Natural killer cell (primary cell): ENCODE measurements at regions of chr6 and their contacts with region 1.

Region 1: GRCh38 chr6:26031595-26032339 is 55.5 kb upstream of the HFE start:
- DNase-seq: peak; percentile 83 to 92
- ATAC-seq: peak; percentile 59 to 80 (median 66)
- H3K4me3 ChIP-seq: peak overlapping the region; percentile 78
- H3K4me3 Mint-ChIP-seq: peak overlapping the region; percentile 96
- H3K27ac ChIP-seq: peak overlapping the region; percentile 92
- H3K27ac Mint-ChIP-seq: peak overlapping the region; percentile 94 to 99
- H3K4me1 ChIP-seq: peaks cover 32% of the 10 kb centered on the region
- H3K4me1 Mint-ChIP-seq: peaks cover 53 to 54% of the 10 kb centered on the region in 2 donors
- H3K27me3 ChIP-seq: no peaks in the 10 kb centered on the region
- H3K27me3 Mint-ChIP-seq: peaks cover 0 to 2% of the 10 kb centered on the region in 2 donors
- CTCF ChIP-seq: no peak

Region 2: GRCh38 chr6:26020329-26021000 is 11.3 kb before region 1 on chr6:
- intact Hi-C with region 1: loop called (anchors 1 kb)
- DNase-seq: peak; percentile 85 to 95
- ATAC-seq: peak; percentile 50 to 69 (median 54)
- H3K4me3 ChIP-seq: peak overlapping the region; percentile 77
- H3K4me3 Mint-ChIP-seq: peak overlapping the region; percentile 98
- H3K27ac ChIP-seq: peak overlapping the region; percentile 95
- H3K27ac Mint-ChIP-seq: peak overlapping the region; percentile 97 to 100
- H3K4me1 ChIP-seq: peaks cover 27% of the 10 kb centered on the region
- H3K4me1 Mint-ChIP-seq: peaks cover 36 to 41% of the 10 kb centered on the region in 2 donors
- H3K27me3 ChIP-seq: no peaks in the 10 kb centered on the region
- H3K27me3 Mint-ChIP-seq: no peaks in the 10 kb centered on the region
- CTCF ChIP-seq: no peak

Region 3: GRCh38 chr6:26045065-26045927 is 13.5 kb after region 1 on chr6:
- intact Hi-C with region 1: loop called (anchors 1 kb)
- DNase-seq: peak; percentile 64 to 92
- ATAC-seq: peak; percentile 52 to 73 (median 64)
- H3K4me3 ChIP-seq: peak overlapping the region; percentile 64
- H3K4me3 Mint-ChIP-seq: peak overlapping the region; percentile 95
- H3K27ac ChIP-seq: peak overlapping the region; percentile 91
- H3K27ac Mint-ChIP-seq: peak overlapping the region; percentile 97 to 98
- H3K4me1 ChIP-seq: peaks cover 26% of the 10 kb centered on the region
- H3K4me1 Mint-ChIP-seq: peaks cover 25 to 28% of the 10 kb centered on the region in 2 donors
- H3K27me3 ChIP-seq: no peaks in the 10 kb centered on the region
- H3K27me3 Mint-ChIP-seq: no peaks in the 10 kb centered on the region
- CTCF ChIP-seq: no peak

Region 4: DNA sequence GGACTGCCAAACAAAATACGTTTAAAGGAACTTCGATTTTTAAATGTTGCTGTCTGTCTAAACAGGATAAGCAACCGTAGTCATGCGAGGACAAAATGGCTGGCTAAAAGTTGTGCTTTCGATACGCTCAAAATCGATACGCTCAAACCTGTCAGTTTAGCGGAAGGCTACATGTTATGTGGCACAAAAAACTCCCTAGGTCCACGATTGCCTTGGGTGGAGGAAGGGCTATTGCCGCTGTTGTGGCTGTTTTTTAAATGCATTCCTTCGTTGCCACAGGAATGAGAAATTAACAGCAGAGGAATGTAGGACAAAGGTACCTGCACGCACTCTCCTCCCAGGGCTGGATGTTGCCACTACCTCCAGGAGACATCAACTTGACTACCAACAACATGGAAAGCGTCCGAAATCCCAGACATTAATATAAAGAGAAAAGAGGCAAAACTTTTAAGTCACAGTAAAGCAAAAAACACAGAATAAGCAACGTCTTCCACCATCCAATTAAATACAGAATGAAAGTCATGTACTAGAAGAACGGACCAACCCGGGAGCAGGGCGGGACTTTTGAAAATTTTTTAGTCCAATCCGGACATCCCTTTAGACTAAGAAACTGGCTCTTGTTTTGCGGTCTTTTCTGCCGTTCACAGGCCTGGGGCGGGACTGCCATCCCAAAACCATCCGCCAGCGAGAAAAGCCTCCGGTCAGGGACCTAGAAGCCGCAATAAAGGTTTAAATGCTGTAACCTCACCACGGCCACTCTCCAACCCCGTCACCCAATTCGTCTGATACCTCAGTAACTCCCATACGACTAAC is 23.3 kb after region 1 on chr6:
- intact Hi-C with region 1: loop called (anchors 1 kb)
- DNase-seq: peak; percentile 83 to 92
- ATAC-seq: peak; percentile 71 to 82 (median 71)
- H3K4me3 ChIP-seq: peak overlapping the region; percentile 78
- H3K4me3 Mint-ChIP-seq: peak overlapping the region; percentile 96
- H3K27ac ChIP-seq: peak overlapping the region; percentile 92
- H3K27ac Mint-ChIP-seq: peak overlapping the region; percentile 98 to 99
- H3K4me1 ChIP-seq: peaks cover 19% of the 10 kb centered on the region
- H3K4me1 Mint-ChIP-seq: peaks cover 29 to 35% of the 10 kb centered on the region in 2 donors
- H3K27me3 ChIP-seq: no peaks in the 10 kb centered on the region
- H3K27me3 Mint-ChIP-seq: no peaks in the 10 kb centered on the region
- CTCF ChIP-seq: no peak

Region 5: GRCh38 chr6:26485112-26485780 is 453.5 kb after region 1 on chr6:
- intact Hi-C with region 1: no loop called
- DNase-seq: no peak
- ATAC-seq: no peak
- H3K4me3 ChIP-seq: no peak overlapping the region
- H3K4me3 Mint-ChIP-seq: no peak overlapping the region
- H3K27ac ChIP-seq: no peak overlapping the region
- H3K27ac Mint-ChIP-seq: no peak overlapping the region
- H3K4me1 ChIP-seq: no peaks in the 10 kb centered on the region
- H3K4me1 Mint-ChIP-seq: peaks cover 0 to 4% of the 10 kb centered on the region in 2 donors
- H3K27me3 ChIP-seq: no peaks in the 10 kb centered on the region
- H3K27me3 Mint-ChIP-seq: no peaks in the 10 kb centered on the region
- CTCF ChIP-seq: no peak